ENCODE measurements at regions of chr2 and their contacts with region 1.

Region 1: DNA sequence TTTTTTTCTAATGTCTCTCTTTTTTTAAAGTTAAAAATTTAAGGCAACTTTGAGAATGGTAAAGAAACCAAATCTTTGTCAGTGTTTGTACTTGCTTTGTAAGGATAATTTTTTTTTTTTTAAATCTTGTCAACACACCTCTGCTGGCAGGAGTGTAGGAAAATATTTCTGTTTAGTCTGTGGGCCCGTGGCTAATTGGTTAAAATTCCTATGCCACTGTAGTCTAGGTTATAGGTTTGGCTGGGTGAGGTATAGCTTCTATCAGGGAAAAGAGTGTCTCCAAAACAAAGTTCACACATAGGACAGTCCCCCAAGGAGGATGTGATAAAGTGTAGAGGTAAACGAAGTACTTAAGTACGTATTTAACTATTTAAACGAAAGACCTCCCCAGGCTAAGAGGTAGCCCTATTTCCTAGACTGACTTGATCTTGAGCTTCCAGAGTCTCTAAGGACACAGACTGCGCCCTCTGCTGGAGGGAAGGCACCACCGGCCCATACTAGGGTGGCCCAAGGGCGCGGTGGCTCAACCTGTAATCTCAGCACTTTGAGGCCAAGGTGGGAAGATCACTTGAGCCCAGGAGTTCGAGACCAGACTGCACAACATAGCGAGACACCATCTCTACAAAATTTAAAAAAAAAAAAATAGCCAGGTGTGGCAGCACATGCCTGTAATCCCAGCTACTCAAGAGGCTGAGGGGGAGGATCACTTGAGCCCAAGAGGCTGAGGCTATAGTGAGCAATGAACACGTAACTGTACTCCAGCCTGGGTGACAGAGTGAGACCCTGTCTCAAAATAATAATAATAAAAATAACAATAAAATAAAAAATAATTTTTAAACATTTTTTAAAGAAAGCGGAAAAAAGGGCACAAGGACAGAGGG is 8.9 kb downstream of the TEX44 start:
- DNase-seq: peak; percentile 88
- ATAC-seq: peak; percentile 58
- H3K4me3 Mint-ChIP-seq: no peak overlapping the region
- H3K27ac Mint-ChIP-seq: no peak overlapping the region
- H3K4me1 Mint-ChIP-seq: peaks cover 7% of the 10 kb centered on the region
- H3K27me3 Mint-ChIP-seq: peaks cover 5% of the 10 kb centered on the region

Region 2: GRCh38 chr2:231482806-231483391 is 118.7 kb before region 1 on chr2:
- CTCF ChIA-PET with region 1: interaction called, 47 read pairs
- DNase-seq: peak; percentile 84
- ATAC-seq: peak; percentile 88
- H3K4me3 Mint-ChIP-seq: peak overlapping the region; percentile 74
- H3K27ac Mint-ChIP-seq: peak overlapping the region; percentile 85
- H3K4me1 Mint-ChIP-seq: peaks cover 13% of the 10 kb centered on the region
- H3K27me3 Mint-ChIP-seq: no peaks in the 10 kb centered on the region

Region 3: GRCh38 chr2:231522799-231523180 is 78.8 kb before region 1 on chr2:
- CTCF ChIA-PET with region 1: interaction called, 100 read pairs
- DNase-seq: no peak
- ATAC-seq: no peak
- H3K4me3 Mint-ChIP-seq: no peak overlapping the region
- H3K27ac Mint-ChIP-seq: no peak overlapping the region
- H3K4me1 Mint-ChIP-seq: peaks cover 62% of the 10 kb centered on the region
- H3K27me3 Mint-ChIP-seq: peaks cover 19% of the 10 kb centered on the region

Region 4: GRCh38 chr2:231563378-231563961 is 38.1 kb before region 1 on chr2:
- CTCF ChIA-PET with region 1: interaction called, 58 read pairs
- DNase-seq: peak; percentile 58
- ATAC-seq: peak; percentile 84
- H3K4me3 Mint-ChIP-seq: no peak overlapping the region
- H3K27ac Mint-ChIP-seq: no peak overlapping the region
- H3K4me1 Mint-ChIP-seq: peaks cover 4% of the 10 kb centered on the region
- H3K27me3 Mint-ChIP-seq: peaks cover 2% of the 10 kb centered on the region

Region 5: DNA sequence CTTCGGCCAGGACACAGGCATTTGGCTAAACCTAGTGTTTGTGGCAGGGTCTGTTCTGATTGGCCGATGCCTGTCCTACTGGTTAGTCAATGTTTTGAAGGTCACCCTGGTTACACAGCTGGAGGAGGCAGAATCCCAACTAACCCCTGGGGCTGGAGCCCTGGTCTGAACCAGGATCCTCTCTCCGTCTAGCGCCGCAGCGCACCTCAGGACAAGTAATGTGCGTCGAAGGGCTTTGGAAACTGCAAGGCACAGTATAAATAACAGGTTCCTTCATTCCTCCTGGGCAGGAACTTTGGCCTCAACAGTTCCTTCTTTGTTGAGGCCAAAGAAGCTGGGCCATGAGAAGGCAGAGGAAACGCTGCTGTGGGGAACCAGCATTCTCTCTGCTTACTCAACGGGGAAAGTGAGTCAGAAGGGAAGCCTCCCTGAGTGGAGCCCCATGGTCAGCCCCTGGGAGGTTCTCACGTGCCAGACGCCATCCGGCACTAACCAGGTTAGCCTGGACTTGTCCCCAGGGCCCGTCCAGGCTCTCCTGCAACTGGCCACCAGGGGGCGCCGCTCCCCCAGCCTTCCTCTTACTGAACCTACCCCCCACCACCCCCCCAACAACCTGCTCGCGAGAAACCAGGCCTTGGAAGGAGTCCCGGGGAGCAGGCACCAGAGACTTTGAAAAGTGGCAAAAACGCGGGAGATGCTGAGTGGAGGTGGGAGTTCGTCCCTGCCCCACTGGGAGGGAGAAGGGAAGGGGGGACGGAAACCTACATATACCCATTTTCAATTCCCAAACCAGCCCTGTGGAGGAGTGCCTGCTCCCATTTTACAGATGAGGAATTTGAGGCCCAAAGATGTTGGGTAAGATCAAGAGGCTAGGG is 10.8 kb after region 1 on chr2:
- CTCF ChIA-PET with region 1: interaction called, 62 read pairs
- DNase-seq: peak; percentile 97
- ATAC-seq: peak; percentile 73
- H3K4me3 Mint-ChIP-seq: peak overlapping the region; percentile 50
- H3K27ac Mint-ChIP-seq: peak overlapping the region; percentile 96
- H3K4me1 Mint-ChIP-seq: peaks cover 32% of the 10 kb centered on the region
- H3K27me3 Mint-ChIP-seq: no peaks in the 10 kb centered on the region

Measured in activated CD8-positive, alpha-beta memory T cell treated with anti-CD3 and anti-CD28 coated beads, Interleukin-2, amount 10 ng/mL, durations not matched to agents 7 days and 5 days (primary cell).